Right cardiac atrium (tissue), 5 donors: ENCODE measurements at regions of chr2 and their contacts with region 1.

Region 1: GRCh38 chr2:219689676-219690628 is 62.5 kb downstream of the SLC4A3 start:
- DNase-seq: no peak
- ATAC-seq: peak; percentile 44 to 61
- H3K4me3 ChIP-seq: no peak overlapping the region
- H3K27ac ChIP-seq: no peak overlapping the region
- H3K4me1 ChIP-seq: no peaks in the 10 kb centered on the region
- H3K27me3 ChIP-seq: no peaks in the 10 kb centered on the region

Region 2: GRCh38 chr2:219402665-219403515 is 287.1 kb before region 1 on chr2:
- intact Hi-C with region 1: loop called in 2 of 4 experiments (anchors 5 kb)
- DNase-seq: peak; percentile 69 to 80 (median 70)
- ATAC-seq: peak; percentile 36 to 58
- H3K4me3 ChIP-seq: no peak overlapping the region
- H3K27ac ChIP-seq: no peak overlapping the region
- H3K4me1 ChIP-seq: peaks cover 3% of the 10 kb centered on the region
- H3K27me3 ChIP-seq: no peaks in the 10 kb centered on the region

Region 3: DNA sequence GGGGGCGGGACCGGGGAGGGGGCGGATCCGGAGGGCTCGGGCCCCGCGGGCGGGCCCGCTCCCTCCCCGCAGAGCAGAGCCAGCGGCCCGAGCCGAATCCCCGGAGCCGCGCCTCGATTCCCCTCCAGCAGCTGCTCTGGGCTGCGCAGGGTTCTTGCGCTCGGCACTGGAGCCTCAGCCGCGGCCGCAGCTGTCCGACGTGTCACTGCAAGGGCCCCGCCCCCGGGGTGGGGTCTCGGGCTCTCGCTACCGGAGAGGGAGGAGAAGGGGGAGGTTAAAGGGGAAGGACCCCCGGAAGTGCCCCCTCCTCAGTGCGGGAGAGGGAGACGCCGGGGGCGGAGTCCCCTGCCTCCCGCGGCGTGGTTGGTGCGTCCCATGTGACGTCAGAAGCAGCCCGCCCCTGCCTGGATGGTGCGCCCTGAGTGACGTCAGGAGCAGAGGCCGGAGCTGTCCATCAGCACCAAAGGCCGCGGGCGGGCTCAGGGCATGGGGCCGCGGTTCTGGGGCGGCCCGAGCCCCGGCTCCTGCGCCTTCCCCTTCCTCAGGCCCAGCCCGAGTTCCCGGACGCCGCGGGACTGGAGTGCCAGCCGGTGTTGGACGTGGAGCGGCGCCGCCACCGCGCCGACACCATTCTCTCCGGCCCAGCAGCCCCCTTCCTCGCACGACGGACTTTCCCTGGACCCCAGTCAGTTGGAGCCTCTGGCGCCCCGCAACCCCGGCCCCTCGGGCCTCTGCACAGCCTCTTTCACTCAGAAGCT is 146.2 kb before region 1 on chr2 and contains the starts of genes CHPF and TMEM198:
- intact Hi-C with region 1: loop called in 3 of 4 experiments (anchors 5 to 10 kb)
- DNase-seq: peak; percentile 99 to 100 (median 99)
- ATAC-seq: peak; percentile 93 to 95
- H3K4me3 ChIP-seq: peak within 1 kb of the TSS; percentile 81
- H3K27ac ChIP-seq: peak within 1 kb of the TSS; percentile 71
- H3K4me1 ChIP-seq: no peaks in the 10 kb centered on the region
- H3K27me3 ChIP-seq: no peaks in the 10 kb centered on the region
- total RNA-seq, gene CHPF: 92.6 to 145 (median 101) TPM
- total RNA-seq, gene TMEM198: 1.8 to 3.4 (median 3.1) TPM

Region 4: DNA sequence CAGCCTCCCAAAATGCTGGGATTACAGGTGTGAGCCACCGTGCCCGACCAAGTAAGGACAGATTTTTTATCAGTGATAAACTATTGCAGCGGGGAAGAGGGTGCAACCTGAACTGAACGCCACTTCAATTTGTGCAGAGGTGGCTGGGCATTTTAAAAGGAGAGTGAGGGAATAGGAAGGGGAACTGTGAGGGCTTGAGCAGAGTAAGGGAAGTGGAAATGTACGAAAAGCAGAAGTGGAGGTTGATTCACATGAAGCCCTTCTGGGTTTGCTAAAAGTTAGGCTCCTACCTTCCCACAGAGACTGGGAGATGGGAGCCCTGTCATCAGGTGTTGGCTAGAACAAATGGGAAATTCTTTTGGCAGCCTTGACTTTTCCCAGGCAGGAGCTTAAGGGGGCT is 86.2 kb before region 1 on chr2:
- intact Hi-C with region 1: loop called in 1 of 4 experiments (anchors 10 kb)
- DNase-seq: no peak
- ATAC-seq: no peak
- H3K4me3 ChIP-seq: no peak overlapping the region
- H3K27ac ChIP-seq: no peak overlapping the region
- H3K4me1 ChIP-seq: no peaks in the 10 kb centered on the region
- H3K27me3 ChIP-seq: no peaks in the 10 kb centered on the region

Region 5: DNA sequence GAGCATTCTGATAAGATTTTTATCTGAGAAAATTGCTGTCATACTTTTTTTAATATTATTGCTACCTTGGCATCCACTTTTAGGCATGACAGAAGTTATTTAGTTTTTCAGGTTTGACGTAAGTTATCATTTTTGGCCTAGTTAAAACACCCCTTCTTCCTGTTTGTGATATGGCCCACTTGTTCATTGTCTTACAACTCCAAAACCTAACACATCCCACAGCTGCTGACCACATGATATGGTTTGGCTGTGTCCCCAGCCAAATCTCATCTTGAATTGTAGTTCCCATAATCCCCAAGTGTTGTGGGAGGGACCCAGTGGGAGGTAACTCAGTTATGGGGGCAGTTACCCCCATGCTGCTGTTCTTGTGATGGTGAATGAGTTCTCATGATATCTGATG is 325.6 kb after region 1 on chr2:
- intact Hi-C with region 1: no loop called
- DNase-seq: no peak
- ATAC-seq: no peak
- H3K4me3 ChIP-seq: no peak overlapping the region
- H3K27ac ChIP-seq: no peak overlapping the region
- H3K4me1 ChIP-seq: no peaks in the 10 kb centered on the region
- H3K27me3 ChIP-seq: no peaks in the 10 kb centered on the region